Activated CD4-positive, alpha-beta memory T cell treated with anti-CD3 and anti-CD28 coated beads for 36 hours (primary cell): ENCODE measurements at regions of chr13 and their contacts with region 1.

Region 1: DNA sequence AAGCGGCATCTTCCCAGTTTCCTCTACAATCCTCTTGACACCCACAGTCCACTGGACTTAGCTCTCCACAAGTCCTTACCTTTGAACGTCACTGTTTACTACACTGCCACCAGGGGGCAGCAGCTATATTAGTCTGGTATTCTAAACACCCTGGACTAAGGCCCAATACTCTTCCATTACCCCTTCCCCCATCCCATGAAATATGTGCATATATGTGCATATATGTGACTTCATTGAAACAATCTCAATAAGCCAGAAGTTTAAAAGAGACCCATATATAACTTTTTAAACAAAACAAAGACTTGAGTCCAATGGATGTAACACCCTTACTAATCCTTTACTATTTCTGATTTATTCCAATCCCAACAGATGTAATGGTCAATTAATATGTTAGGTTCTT is 15.5 kb downstream of the GGACT start:
- DNase-seq: peak; percentile 78
- H3K4me3 Mint-ChIP-seq: no peak overlapping the region
- H3K27ac Mint-ChIP-seq: no peak overlapping the region
- H3K4me1 Mint-ChIP-seq: peaks cover 12% of the 10 kb centered on the region
- H3K27me3 Mint-ChIP-seq: no peaks in the 10 kb centered on the region

Region 2: GRCh38 chr13:100560498-100561157 is 12.5 kb before region 1 on chr13:
- CTCF ChIA-PET with region 1: interaction called, 17 read pairs
- POLR2A ChIA-PET with region 1: no interaction called
- intact Hi-C with region 1: no loop called
- DNase-seq: no peak
- H3K4me3 Mint-ChIP-seq: no peak overlapping the region
- H3K27ac Mint-ChIP-seq: no peak overlapping the region
- H3K4me1 Mint-ChIP-seq: no peaks in the 10 kb centered on the region
- H3K27me3 Mint-ChIP-seq: no peaks in the 10 kb centered on the region

Region 3: DNA sequence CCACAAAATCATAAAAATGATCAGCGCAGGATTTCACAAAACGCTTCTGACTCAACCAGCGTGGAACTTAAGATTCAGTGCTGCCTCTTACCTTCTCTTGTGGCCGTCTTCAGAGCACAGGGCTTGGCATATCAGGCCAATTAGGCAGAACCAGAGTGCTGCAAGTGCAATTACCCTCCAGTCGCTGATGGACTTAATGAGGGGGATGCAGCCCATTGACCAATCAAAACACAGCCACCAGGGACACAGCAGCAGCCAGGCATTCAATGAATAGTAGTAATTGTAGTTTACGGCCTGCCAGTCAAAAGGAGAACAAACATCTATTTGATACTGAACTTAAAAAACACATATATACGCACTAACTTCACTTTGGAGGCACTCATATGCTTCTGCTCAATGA is 63.3 kb after region 1 on chr13:
- CTCF ChIA-PET with region 1: no interaction called
- POLR2A ChIA-PET with region 1: no interaction called
- intact Hi-C with region 1: no loop called
- DNase-seq: no peak
- H3K4me3 Mint-ChIP-seq: no peak overlapping the region
- H3K27ac Mint-ChIP-seq: no peak overlapping the region
- H3K4me1 Mint-ChIP-seq: no peaks in the 10 kb centered on the region
- H3K27me3 Mint-ChIP-seq: no peaks in the 10 kb centered on the region

Region 4: GRCh38 chr13:101098873-101099272 is 525.8 kb after region 1 on chr13:
- CTCF ChIA-PET with region 1: interaction called, 10 read pairs
- POLR2A ChIA-PET with region 1: no interaction called
- intact Hi-C with region 1: loop called (anchors 5 kb)
- DNase-seq: no peak
- H3K4me3 Mint-ChIP-seq: no peak overlapping the region
- H3K27ac Mint-ChIP-seq: no peak overlapping the region
- H3K4me1 Mint-ChIP-seq: no peaks in the 10 kb centered on the region
- H3K27me3 Mint-ChIP-seq: peaks cover 8% of the 10 kb centered on the region

Region 5: DNA sequence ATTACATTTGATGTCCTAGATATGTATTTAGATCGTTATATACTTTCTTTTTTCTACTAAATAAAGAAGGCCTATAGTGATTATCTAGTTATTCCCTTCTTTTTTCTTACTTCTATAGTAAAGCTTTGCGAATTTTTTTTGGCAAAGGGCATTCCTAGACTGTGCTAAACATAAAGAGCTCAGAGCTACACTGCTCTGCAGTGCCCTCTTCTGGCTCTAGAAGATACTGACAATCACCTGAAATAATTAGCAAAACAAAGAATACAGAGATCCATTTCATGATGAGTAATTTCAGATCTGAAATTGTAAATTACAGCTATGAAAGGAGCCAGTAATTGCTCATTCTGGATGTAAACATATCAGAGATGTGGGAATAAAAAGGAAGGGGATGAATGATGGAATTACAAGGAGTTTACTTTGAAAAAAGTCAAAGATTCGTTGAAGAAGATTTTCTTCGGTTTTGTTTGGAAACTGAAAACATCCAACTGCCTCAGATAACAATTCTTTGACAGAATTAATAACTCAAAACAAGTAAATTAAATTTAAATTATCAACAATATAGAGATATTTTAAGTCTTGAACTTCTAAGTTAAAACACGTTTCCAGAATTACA is 554.7 kb after region 1 on chr13:
- CTCF ChIA-PET with region 1: interaction called, 38 read pairs
- POLR2A ChIA-PET with region 1: no interaction called
- intact Hi-C with region 1: loop called (anchors 1 kb)
- DNase-seq: peak; percentile 17
- H3K4me3 Mint-ChIP-seq: no peak overlapping the region
- H3K27ac Mint-ChIP-seq: no peak overlapping the region
- H3K4me1 Mint-ChIP-seq: peaks cover 2% of the 10 kb centered on the region
- H3K27me3 Mint-ChIP-seq: peaks cover 4% of the 10 kb centered on the region